Dorsolateral prefrontal cortex (tissue), 120 donors: ENCODE measurements at regions of chr13 and their contacts with region 1.

Region 1: DNA sequence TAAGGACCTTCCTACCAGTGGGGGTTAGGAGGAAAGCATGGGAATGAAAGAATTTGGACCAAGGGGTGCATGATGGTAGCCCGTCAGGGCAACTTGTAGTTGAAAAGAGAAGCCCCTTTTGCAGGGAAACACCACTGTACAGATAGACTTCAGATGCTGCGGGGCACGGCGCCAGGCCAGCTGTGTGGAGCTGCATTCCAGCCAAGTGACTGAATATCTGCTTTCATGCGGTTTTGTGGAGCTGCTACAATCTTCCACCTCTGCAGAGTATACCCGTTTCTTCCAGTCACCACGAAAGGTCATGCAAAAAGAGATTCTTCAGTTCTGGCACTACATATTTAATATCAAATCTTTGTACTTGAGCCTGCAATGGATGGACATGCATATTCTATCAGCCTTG is 104.7 kb downstream of the RGCC start:
- DNase-seq: peak; percentile 43 to 98 (median 92)
- H3K4me3 ChIP-seq: peak overlapping the region in 3 of 59 donors; percentile 3 to 25 (median 21)
- H3K27ac ChIP-seq: peak overlapping the region; percentile 85 to 100 (median 98)
- H3K27me3 ChIP-seq: no peaks in the 10 kb centered on the region
- CTCF ChIP-seq: peak in 2 of 56 donors; percentile 5 to 8

Region 2: DNA sequence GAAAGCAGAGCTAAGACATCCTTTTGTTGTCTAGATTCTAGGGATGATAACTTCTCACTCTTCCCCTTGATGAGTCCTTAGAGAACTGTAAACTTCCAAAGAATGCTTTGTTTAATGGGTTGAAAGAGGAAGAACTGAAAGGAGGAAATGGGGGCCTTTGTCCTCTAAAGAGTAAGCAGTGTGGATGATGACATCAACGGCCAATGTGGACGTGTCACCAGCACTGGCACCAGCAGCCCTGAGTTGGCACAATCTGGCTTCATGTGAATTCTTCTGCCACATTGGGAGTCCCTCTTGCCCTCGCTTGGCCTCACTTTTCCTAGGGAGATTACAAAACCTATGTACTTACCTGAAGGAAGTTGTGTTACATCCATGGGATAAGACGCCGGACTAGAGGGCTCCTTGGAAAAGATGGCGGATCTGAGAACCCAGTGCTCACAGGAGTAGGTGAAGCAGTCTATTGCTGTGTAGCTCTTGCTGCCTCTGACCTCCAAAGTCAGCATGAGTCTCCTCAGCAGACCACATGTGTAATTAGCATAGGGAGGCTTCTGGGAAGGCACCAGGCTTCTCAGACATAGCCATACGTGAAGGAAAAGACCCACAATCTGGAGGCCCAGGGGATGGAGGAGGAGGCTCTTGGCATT is 41.9 kb before region 1 on chr13:
- intact Hi-C with region 1: no loop called
- DNase-seq: no peak
- H3K4me3 ChIP-seq: no peak overlapping the region
- H3K27ac ChIP-seq: no peak overlapping the region
- H3K27me3 ChIP-seq: no peaks in the 10 kb centered on the region
- CTCF ChIP-seq: no peak

Region 3: GRCh38 chr13:41546372-41547190 is 15.5 kb before region 1 on chr13:
- intact Hi-C with region 1: loop called (anchors 1 kb)
- DNase-seq: peak in 1 of 10 donors; percentile 47
- H3K4me3 ChIP-seq: peak overlapping the region in 23 of 59 donors; percentile 1 to 46 (median 16)
- H3K27ac ChIP-seq: peak overlapping the region; percentile 92 to 100 (median 99)
- H3K27me3 ChIP-seq: no peaks in the 10 kb centered on the region
- CTCF ChIP-seq: no peak

Region 4: DNA sequence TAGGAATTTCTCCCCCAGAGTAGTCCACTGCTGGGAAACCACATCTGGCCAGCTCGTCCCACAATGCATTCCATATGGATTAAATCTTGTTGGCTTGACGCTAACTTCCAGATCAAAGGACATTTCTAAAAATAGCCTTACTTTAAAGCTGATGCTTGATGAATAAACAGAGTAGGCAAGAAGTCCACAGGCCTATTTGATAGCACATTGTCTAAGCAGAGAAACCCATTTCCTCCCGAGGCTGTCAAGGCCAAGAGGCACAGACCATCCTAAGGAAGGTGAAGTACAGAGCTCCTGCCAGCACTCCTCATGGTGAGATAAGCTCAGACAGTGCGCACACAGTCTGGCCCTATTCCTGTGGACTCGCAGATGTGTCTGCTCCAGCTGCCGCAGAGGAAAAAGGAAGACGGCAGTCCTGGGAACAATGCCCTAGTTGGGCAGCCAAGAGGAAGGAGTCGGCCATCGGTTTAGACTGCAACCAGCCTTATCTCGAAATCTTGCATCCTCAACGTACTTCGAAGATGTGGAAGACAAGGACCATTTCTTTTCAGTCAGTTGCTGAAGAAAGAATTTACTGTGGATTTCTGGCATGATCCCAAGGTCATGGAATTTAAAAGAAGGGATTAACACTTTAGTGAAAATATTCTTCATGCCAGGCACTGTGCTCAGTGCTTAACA is 52.0 kb after region 1 on chr13:
- intact Hi-C with region 1: loop called (anchors 5 to 10 kb)
- DNase-seq: peak in 4 of 10 donors; percentile 15 to 47 (median 46)
- H3K4me3 ChIP-seq: no peak overlapping the region
- H3K27ac ChIP-seq: peak overlapping the region in 46 of 59 donors; percentile 1 to 76 (median 56)
- H3K27me3 ChIP-seq: no peaks in the 10 kb centered on the region
- CTCF ChIP-seq: peak in 1 of 56 donors; percentile 11

Region 5: DNA sequence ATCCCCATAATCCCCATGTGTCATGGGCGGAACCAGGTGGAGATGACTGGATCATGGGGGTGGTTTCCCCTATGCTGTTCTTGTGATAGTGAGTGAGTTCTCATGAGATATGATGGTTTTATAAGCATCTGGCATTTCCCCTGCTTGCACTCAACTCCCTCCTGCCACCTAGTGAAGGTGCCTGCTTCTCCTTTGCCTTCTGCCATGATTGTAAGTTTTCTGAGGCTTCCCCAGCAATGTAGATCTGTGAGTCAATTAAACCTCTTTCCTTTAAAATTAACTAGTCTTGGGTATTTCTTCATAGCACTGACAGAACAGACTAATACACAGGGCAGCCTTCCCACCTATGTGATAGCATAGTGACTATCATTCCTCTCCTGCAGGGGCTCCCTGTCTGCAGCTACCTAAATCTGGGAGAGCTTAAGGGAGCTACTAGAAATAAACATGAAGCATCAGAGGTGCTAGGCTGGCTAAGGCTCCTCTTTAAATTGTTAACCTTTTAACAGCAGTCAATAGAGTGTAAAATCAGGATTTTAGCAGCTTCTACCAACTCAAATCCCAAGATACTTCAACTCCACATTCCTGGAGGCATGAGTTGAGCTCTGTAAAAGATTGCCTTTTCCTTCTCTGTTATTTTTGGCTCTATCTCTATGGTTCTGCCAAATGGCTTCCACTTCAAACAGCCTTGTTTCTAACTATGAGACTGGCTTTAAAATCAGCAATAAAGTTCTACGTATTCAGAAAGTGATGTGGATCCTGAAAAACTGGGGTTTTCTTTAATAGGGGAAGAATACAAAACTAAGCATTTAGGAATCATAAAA is 286.6 kb after region 1 on chr13:
- intact Hi-C with region 1: no loop called
- DNase-seq: no peak
- H3K4me3 ChIP-seq: no peak overlapping the region
- H3K27ac ChIP-seq: no peak overlapping the region
- H3K27me3 ChIP-seq: no peaks in the 10 kb centered on the region
- CTCF ChIP-seq: peak in 11 of 56 donors; percentile 8 to 43 (median 27)

Region 6: DNA sequence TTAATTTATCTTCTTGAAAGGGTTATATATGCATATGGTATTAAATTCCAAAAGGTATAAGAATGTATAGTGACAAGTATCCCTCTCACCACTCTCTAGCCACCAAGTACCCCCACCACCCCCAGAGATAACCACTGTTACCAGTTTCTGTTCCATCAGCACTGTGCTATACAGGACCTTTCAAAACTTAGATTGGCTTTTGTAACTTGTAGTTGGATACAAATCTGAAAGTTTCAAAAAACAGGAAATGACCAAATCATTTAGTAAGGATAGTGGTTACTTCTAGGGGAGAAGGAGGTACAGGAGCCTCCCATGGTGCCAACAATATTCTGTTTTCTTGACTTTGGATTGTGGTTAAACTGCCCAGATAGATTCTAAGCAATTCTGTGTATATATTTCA is 766.6 kb after region 1 on chr13:
- intact Hi-C with region 1: no loop called
- DNase-seq: no peak
- H3K4me3 ChIP-seq: no peak overlapping the region
- H3K27ac ChIP-seq: no peak overlapping the region
- H3K27me3 ChIP-seq: no peaks in the 10 kb centered on the region
- CTCF ChIP-seq: no peak